ENCODE measurements at regions of chr2 and their contacts with region 1.

Region 1: GRCh38 chr2:37168217-37168981 is 11.6 kb upstream of the EIF2AK2 start:
- DNase-seq: peak; percentile 66
- ATAC-seq: peak; percentile 98
- H3K4me3 ChIP-seq: no peak overlapping the region
- H3K27ac ChIP-seq: no peak overlapping the region
- H3K4me1 ChIP-seq: peaks cover 5% of the 10 kb centered on the region
- H3K27me3 ChIP-seq: no peaks in the 10 kb centered on the region
- CTCF ChIP-seq: peak; percentile 87

Region 2: DNA sequence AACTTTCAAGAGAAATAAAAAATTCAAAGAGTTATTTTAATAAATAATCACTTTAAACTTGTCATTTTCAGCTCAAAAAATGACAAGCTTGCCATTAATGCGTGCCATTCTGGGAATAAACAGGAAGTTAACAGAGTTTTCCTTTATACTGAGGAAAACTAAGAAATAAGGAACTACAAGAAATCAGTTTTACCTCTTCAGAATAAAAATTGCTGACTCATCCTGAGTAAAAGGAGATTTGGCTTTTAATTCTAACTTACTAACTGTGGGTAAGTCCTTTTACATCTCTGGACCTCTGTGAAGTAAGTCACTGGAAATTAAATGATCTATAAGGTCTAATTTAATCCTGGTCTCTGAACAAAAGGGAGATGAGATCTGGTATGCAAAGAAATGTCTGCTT is 46.9 kb after region 1 on chr2:
- CTCF ChIA-PET with region 1: no interaction called
- POLR2A ChIA-PET with region 1: no interaction called
- intact Hi-C with region 1: loop called (anchors 5 kb)
- DNase-seq: no peak
- ATAC-seq: no peak
- H3K4me3 ChIP-seq: no peak overlapping the region
- H3K27ac ChIP-seq: peak overlapping the region; percentile 16
- H3K4me1 ChIP-seq: no peaks in the 10 kb centered on the region
- H3K27me3 ChIP-seq: no peaks in the 10 kb centered on the region
- CTCF ChIP-seq: no peak

Region 3: DNA sequence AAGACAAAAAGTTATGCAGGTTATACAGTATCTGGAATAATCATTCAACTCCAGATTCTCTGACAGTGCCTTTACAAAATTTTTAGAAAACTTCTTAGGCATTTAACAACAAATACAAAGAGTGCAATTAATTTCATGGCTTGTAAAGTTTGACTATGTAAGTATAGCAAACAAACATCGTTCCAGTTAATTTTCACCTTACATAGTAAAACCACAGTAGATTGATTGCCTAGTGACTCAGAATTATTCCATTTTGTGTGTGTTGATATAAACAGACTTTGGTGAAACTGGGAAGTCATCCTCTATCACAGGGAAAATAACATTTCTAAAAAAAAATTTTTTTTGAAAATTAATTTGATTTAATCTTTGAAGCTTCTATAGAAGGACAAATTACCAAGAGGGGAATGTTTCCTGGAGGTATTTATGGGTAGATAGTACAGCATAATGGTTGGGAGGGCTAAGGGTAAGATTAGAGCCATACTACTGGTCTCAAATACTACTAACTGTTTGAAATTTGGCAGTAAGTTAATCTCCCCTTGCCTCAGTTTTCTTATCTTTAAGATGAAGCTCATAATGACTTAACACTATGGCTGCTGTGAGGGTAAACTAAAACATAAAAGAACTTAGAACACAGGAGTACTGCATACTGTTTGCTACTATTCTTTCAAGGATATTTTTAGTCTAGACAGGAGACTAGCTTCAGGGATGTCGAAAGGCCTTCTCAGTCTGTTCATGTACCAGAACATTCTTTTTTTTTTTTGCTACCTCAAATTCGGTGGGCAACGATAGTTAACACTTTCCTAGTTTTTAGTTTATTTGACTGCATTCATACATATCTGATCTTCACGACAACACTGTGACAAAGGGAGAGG is 82.7 kb after region 1 on chr2:
- CTCF ChIA-PET with region 1: no interaction called
- POLR2A ChIA-PET with region 1: no interaction called
- intact Hi-C with region 1: loop called (anchors 5 kb)
- DNase-seq: no peak
- ATAC-seq: peak; percentile 66
- H3K4me3 ChIP-seq: no peak overlapping the region
- H3K27ac ChIP-seq: no peak overlapping the region
- H3K4me1 ChIP-seq: peaks cover 8% of the 10 kb centered on the region; the same call in 1 of the 2 replicates
- H3K27me3 ChIP-seq: no peaks in the 10 kb centered on the region
- CTCF ChIP-seq: no peak

Region 4: GRCh38 chr2:37877457-37878315 is 709.3 kb after region 1 on chr2:
- CTCF ChIA-PET with region 1: no interaction called
- POLR2A ChIA-PET with region 1: no interaction called
- intact Hi-C with region 1: loop called (anchors 1 kb)
- DNase-seq: peak; percentile 86
- ATAC-seq: peak; percentile 76
- H3K4me3 ChIP-seq: 0 out of 2 replicates have a peak overlapping the region, but pooled peaks have one; percentile 24
- H3K27ac ChIP-seq: no peak overlapping the region
- H3K4me1 ChIP-seq: no peaks in the 10 kb centered on the region
- H3K27me3 ChIP-seq: no peaks in the 10 kb centered on the region
- CTCF ChIP-seq: peak; percentile 86

Region 5: GRCh38 chr2:37890893-37891495 is 722.6 kb after region 1 on chr2:
- CTCF ChIA-PET with region 1: no interaction called
- POLR2A ChIA-PET with region 1: no interaction called
- intact Hi-C with region 1: loop called (anchors 5 kb)
- DNase-seq: peak; percentile 89
- ATAC-seq: peak; percentile 97
- H3K4me3 ChIP-seq: no peak overlapping the region
- H3K27ac ChIP-seq: no peak overlapping the region
- H3K4me1 ChIP-seq: no peaks in the 10 kb centered on the region
- H3K27me3 ChIP-seq: no peaks in the 10 kb centered on the region
- CTCF ChIP-seq: peak; percentile 87

Measured in PC-3 (cell line).